GM10248 (cell line): ENCODE measurements at regions of chr18 and their contacts with region 1.

Region 1: GRCh38 chr18:41681138-41681888 is 273.7 kb upstream of the PIK3C3 start:
- DNase-seq: no peak
- CTCF ChIP-seq: no peak

Region 2: GRCh38 chr18:41693008-41693407 is 11.7 kb after region 1 on chr18:
- CTCF ChIA-PET with region 1: interaction called, 17 read pairs
- POLR2A ChIA-PET with region 1: no interaction called
- DNase-seq: no peak
- CTCF ChIP-seq: no peak